ENCODE measurements at regions of chr12 and their contacts with region 1.

Region 1: GRCh38 chr12:31274520-31275300 is 51.2 kb downstream of the SINHCAF start:
- DNase-seq: no peak
- H3K4me3 ChIP-seq: no peak overlapping the region
- CTCF ChIP-seq: no peak

Region 2: DNA sequence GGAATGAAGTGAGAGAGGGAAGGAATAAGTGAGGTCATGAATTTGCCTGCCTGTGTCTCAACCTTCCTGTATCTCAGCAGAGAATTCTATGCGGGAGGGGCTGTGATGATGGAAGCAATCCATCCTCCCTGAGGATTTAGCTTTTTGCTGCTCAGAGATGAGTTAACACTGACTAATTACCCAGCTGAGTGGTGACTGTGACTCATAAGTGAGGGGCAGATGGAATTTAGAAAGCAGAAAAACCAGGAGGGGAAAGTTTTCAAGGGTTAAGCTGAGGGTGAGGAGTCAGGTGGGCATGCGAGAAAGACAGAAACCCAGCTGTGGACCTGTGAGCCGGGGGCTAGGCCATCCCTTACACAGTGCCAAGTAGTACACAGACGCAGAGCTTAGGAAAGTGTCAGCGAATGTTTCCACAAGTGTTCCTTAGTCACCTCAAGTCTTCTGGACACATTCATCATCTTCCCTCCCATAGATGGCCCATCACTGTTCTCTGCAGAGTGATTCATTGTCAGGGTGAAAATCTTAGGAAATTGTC is 856.9 kb before region 1 on chr12:
- CTCF ChIA-PET with region 1: no interaction called
- POLR2A ChIA-PET with region 1: no interaction called
- DNase-seq: peak; percentile 67
- H3K4me3 ChIP-seq: no peak overlapping the region
- CTCF ChIP-seq: no peak

Region 3: GRCh38 chr12:31238764-31239387 is 35.8 kb before region 1 on chr12:
- CTCF ChIA-PET with region 1: interaction called, 16 read pairs
- POLR2A ChIA-PET with region 1: no interaction called
- DNase-seq: no peak
- H3K4me3 ChIP-seq: no peak overlapping the region; the same call in 1 of the 2 replicates
- CTCF ChIP-seq: peak; percentile 66

Region 4: GRCh38 chr12:31245822-31246469 is 28.8 kb before region 1 on chr12:
- CTCF ChIA-PET with region 1: interaction called, 71 read pairs
- POLR2A ChIA-PET with region 1: no interaction called
- DNase-seq: no peak
- H3K4me3 ChIP-seq: no peak overlapping the region
- CTCF ChIP-seq: no peak

Region 5: DNA sequence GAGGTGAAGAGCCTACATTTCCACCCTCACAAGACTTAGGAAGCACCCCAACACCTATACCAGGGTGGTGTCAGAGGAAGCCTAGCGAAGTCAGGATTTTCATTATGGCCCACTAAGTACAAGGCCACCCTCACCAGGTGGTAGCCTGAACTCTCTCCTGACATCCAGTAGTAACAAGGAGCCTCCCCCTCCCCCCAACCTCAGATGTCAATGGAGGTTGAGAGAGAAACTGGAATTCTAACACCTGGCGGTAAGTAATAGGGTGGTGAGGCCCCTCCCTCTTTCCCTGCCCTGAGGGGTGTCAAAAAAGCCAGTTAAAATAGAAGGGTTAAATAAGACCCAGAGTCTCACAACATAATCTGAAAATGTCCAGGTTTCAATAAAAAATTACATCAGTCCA is 13.7 kb after region 1 on chr12:
- CTCF ChIA-PET with region 1: interaction called, 27 read pairs
- POLR2A ChIA-PET with region 1: no interaction called
- DNase-seq: no peak
- H3K4me3 ChIP-seq: no peak overlapping the region
- CTCF ChIP-seq: no peak

Region 6: DNA sequence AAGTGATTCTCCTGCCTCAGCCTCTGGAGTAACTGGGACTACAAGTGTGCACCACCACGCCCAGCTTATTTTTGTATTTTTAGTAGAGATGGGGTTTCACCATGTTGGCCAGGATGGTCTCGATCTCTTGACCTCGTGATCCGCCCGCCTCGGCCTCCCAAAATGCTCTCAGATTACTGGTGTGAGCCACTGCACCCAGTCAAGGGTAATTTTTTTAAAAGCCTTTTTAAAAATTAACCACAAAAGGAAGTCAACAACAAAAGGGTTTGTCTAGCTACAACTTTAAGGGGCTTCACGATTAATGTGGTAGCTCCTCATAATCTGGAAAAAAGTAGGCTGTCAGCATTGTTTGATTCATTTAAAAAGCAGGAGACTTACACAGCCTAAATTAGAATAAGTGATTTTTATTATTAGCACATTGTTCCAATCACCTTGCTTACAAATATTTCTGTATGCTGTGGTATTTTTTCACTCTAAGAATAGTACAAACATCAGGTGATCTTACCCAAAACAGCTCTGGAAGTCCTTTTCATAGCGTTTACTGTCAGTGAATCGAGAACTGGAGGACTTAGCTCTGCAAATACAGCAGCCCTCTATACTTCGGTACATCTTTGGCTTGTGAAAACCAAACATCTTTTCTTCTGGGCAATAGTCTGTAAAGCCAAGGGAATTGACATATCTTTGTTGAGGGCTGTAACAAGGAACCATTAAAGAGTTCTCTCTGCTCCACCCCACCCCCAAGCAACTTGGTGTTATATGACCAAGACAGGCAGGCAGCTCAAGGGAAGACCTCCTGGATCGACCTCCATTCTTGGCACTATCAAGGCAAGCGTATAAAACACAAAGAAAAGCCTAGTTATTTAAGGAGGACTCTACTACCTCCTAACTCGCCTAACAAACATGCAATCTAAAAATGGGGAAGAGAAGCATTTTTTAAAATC is 23.1 kb after region 1 on chr12:
- CTCF ChIA-PET with region 1: interaction called, 27 read pairs
- POLR2A ChIA-PET with region 1: no interaction called
- DNase-seq: no peak
- H3K4me3 ChIP-seq: no peak overlapping the region
- CTCF ChIP-seq: no peak

Region 7: GRCh38 chr12:31317471-31318395 is 43.0 kb after region 1 on chr12:
- CTCF ChIA-PET with region 1: interaction called, 14 read pairs
- POLR2A ChIA-PET with region 1: no interaction called
- DNase-seq: no peak
- H3K4me3 ChIP-seq: no peak overlapping the region
- CTCF ChIP-seq: no peak

Region 8: DNA sequence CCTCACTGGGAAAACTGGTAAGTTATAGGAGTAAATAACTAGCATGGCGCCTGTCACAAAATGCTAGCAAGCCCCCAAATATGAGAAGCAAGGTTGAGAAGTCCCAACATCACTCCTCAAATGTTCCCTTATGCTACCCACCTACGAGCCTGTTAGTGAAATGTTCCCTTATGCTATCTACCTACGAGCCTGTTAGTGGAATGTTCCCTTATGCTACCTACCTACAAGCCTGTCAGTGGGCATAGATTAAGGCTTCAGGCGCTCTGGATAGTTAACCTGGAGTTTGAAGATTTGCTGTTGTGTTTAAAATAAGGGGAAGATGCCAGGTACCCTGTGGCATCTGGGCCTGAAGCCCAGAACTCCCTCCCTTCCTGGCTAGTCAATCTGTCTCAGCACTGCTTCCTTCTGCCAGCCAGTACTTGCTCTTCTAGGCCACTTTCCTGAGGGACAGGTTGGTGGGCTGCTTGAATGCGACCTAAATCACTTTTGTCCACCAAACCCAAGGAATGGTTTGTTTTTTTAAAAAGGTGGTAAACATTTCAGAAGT is 118.4 kb after region 1 on chr12:
- CTCF ChIA-PET with region 1: no interaction called
- POLR2A ChIA-PET with region 1: no interaction called
- DNase-seq: no peak
- H3K4me3 ChIP-seq: no peak overlapping the region
- CTCF ChIP-seq: no peak

Measured in AG04449 (cell line).